ENCODE measurements at regions of chr11 and their contacts with region 1.

Region 1: DNA sequence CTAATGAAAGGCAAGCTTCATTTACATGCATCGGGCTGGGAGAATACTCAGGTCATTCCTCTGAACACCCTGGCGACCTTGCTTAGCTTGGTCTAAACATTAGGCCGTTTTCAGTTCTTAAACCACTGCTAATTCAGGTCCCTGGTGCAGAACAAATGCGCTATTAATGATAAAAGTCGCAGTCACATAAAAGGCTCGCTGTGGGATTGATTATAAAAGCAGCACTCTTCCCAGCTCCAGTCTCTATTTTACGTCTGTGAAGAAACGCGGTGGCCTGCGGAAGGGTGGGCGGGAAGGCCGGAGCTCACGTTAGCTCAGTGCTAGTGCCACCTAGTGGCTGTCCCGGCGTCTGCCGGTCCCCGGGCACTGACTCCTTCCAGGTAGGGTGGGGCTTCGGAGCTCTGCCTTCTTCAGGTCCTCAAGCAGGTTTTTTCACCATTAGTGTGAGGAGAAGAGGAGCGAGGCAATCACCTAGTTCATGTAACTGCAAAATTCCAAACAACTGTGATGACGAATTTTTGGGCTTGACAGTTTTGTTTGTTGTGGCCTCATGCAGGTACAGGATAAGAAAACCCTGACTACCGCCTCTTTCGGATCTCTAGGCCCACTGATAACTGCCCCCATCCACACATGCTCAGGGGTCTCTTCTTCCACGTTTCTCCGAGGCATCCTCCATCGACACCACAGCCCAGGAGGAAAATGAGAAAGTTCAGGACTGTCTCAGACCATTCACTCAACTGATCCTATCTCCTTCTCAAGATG is 66.5 kb upstream of the CLMP start:
- DNase-seq: peak; percentile 88 to 91
- H3K4me3 ChIP-seq: 0 out of 2 replicates have a peak overlapping the region, but pooled peaks have one; percentile 4
- H3K4me3 Mint-ChIP-seq: peak overlapping the region; percentile 62
- H3K27ac Mint-ChIP-seq: no peak overlapping the region
- H3K4me1 ChIP-seq: peaks cover 6% of the 10 kb centered on the region; the same call in 1 of the 2 replicates
- H3K4me1 Mint-ChIP-seq: no peaks in the 10 kb centered on the region
- H3K27me3 ChIP-seq: peaks cover 1% of the 10 kb centered on the region; the same call in 1 of the 2 replicates
- H3K27me3 Mint-ChIP-seq: peaks cover 18% of the 10 kb centered on the region
- CTCF ChIP-seq: peak; percentile 95 to 96

Region 2: DNA sequence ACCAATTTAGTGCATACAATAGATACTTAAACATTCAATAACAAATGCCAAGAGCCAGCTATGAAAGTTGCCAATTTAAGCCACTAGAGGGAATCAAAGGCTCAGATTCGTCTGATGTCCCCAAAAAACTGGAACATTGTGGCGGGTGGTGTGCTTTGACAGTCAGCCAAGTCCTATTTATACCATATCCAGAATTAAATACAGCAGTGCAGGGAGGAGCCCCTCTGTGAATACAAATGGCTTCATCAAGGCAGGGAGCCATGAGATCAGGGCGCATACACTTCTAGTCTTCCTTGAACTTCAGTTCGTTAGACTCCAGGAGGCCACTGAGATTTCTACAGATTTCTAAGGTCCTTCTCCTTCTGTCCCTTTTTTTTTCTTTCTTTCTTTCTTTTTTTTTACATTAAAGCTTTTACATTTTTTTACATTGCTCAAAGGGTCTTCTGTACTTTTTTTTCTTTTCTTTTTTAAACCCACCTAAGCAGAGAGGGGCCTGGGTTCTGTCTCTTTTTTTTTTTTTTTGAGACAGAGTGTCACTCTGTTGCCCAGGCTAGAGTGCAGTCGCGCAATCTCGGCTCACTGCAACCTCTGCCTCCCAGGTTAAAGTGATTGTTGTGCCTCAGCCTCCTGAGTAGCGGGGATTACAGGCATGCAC is 158.1 kb before region 1 on chr11:
- CTCF ChIA-PET with region 1: interaction called, 50 read pairs
- POLR2A ChIA-PET with region 1: no interaction called
- intact Hi-C with region 1: loop called (anchors 1 kb)
- DNase-seq: peak; percentile 53 to 69
- H3K4me3 ChIP-seq: no peak overlapping the region
- H3K4me3 Mint-ChIP-seq: no peak overlapping the region
- H3K27ac Mint-ChIP-seq: no peak overlapping the region
- H3K4me1 ChIP-seq: peaks cover 10% of the 10 kb centered on the region
- H3K4me1 Mint-ChIP-seq: peaks cover 10% of the 10 kb centered on the region
- H3K27me3 ChIP-seq: no peaks in the 10 kb centered on the region
- H3K27me3 Mint-ChIP-seq: no peaks in the 10 kb centered on the region
- CTCF ChIP-seq: peak; percentile 83 to 91

Region 3: DNA sequence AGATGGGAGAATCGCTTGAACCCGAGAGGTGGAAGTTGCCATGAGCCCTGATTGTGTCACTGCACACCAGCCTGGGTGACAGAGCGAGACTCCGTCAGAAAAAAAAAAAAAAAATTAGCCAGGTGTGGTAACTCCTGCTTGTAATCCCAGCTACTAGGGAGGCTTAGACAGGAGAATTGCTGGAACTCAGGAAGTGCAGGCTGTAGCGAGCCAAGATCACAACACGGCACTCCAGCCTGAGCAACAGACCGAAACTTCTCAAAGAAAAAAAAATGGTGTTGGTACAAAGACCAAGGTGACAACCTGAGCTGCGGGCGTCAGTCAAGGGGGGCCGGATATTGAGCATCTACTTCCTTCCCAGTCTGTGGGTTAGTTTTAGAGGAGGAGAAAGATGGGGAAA is 151.2 kb before region 1 on chr11:
- CTCF ChIA-PET with region 1: interaction called, 25 read pairs
- POLR2A ChIA-PET with region 1: interaction called, 3 read pairs
- intact Hi-C with region 1: loop called (anchors 1 kb)
- DNase-seq: no peak
- H3K4me3 ChIP-seq: no peak overlapping the region
- H3K4me3 Mint-ChIP-seq: no peak overlapping the region
- H3K27ac Mint-ChIP-seq: no peak overlapping the region
- H3K4me1 ChIP-seq: peaks cover 13% of the 10 kb centered on the region
- H3K4me1 Mint-ChIP-seq: peaks cover 13% of the 10 kb centered on the region
- H3K27me3 ChIP-seq: no peaks in the 10 kb centered on the region
- H3K27me3 Mint-ChIP-seq: no peaks in the 10 kb centered on the region
- CTCF ChIP-seq: no peak

Region 4: GRCh38 chr11:123166071-123166559 is 95.4 kb before region 1 on chr11:
- CTCF ChIA-PET with region 1: interaction called, 10 read pairs
- POLR2A ChIA-PET with region 1: no interaction called
- intact Hi-C with region 1: no loop called
- DNase-seq: peak; percentile 79 to 84
- H3K4me3 ChIP-seq: no peak overlapping the region
- H3K4me3 Mint-ChIP-seq: no peak overlapping the region
- H3K27ac Mint-ChIP-seq: peak overlapping the region; percentile 33
- H3K4me1 ChIP-seq: no peaks in the 10 kb centered on the region
- H3K4me1 Mint-ChIP-seq: peaks cover 10% of the 10 kb centered on the region
- H3K27me3 ChIP-seq: no peaks in the 10 kb centered on the region
- H3K27me3 Mint-ChIP-seq: no peaks in the 10 kb centered on the region
- CTCF ChIP-seq: peak; percentile 80 to 90

Region 5: DNA sequence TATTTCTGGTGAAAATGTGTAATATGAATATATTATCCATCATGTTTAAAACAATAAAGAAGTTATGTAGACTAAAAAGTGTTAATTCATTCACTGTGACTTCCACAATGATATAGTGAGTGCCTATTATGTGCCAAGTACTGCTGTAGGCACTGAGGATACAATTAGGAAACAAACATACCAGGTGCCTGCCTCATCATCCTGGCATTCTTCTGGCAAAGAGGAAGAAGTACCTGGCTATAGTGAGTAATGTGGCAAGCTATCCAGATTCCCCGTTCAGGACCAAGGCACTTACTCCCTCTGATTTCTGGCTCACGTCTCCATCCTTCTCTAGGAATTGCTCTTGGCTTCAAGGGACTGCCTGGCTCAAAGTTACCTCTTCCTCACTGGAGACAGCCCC is 11.0 kb after region 1 on chr11:
- CTCF ChIA-PET with region 1: interaction called, 14 read pairs
- POLR2A ChIA-PET with region 1: no interaction called
- intact Hi-C with region 1: no loop called
- DNase-seq: no peak
- H3K4me3 ChIP-seq: no peak overlapping the region
- H3K4me3 Mint-ChIP-seq: no peak overlapping the region
- H3K27ac Mint-ChIP-seq: no peak overlapping the region
- H3K4me1 ChIP-seq: no peaks in the 10 kb centered on the region
- H3K4me1 Mint-ChIP-seq: no peaks in the 10 kb centered on the region
- H3K27me3 ChIP-seq: no peaks in the 10 kb centered on the region; the same call in 1 of the 2 replicates
- H3K27me3 Mint-ChIP-seq: peaks cover 18% of the 10 kb centered on the region
- CTCF ChIP-seq: no peak

Measured in Caco-2 (cell line).